Posterior cingulate gyrus (tissue), 11 donors: ENCODE measurements at regions of chr5 and their contacts with region 1.

Region 1: GRCh38 chr5:77844623-77845323 is 68.6 kb upstream of the TBCA start:
- DNase-seq: peak in 3 of 10 donors; percentile 55 to 89 (median 79)

Region 2: DNA sequence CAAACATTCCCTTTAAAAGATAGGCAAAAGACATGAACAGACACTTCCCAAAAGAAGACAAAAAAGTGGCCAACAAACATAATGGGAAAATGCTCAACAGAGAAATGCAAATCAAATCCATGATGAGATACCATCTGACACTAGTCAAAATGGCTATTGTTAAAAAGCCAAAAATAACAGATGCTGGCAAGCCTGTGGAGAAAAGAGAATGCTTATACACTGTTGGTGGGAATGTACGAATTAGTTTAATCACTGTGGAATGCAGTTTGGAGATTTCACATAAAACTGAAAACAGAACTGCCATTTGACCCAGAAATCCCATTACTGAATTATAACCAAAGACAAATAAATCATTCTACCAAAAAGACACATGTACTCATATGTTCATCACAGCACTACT is 294.4 kb before region 1 on chr5:
- intact Hi-C with region 1: no loop called
- DNase-seq: no peak

Region 3: GRCh38 chr5:77775790-77776553 is 68.8 kb before region 1 on chr5 and contains the start of gene TBCA:
- intact Hi-C with region 1: loop called (anchors 2 kb)
- DNase-seq: peak; percentile 75 to 98 (median 84)

Region 4: DNA sequence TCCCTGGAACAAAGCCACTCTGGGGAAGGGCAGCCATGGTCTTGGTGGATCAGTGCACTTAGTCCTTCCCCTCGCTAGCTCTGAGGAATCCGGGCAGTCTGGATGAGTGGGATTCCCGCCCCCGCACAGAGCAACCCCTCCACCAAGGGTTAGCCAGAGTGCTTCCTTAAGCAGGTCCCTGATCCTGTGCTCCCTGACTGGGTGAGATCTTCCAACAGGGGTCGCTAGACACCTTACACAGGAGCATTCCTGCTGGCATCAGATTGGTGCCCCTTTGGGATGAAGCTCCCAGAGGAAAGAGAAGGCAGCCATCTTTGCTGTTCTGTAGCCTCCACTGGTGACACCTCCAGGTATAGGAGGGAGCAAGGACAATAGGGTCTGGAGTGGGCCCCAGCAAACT is 220.9 kb after region 1 on chr5:
- intact Hi-C with region 1: no loop called
- DNase-seq: peak in 1 of 10 donors; percentile 81